Esophagus squamous epithelium (tissue), 5 donors: ENCODE measurements at regions of chr17 and their contacts with region 1.

Region 1: GRCh38 chr17:45270828-45271418 is 9.0 kb upstream of the SPATA32 start:
- DNase-seq: no peak
- H3K4me3 ChIP-seq: no peak overlapping the region
- H3K27ac ChIP-seq: no peak overlapping the region
- H3K4me1 ChIP-seq: peaks cover 0 to 7% (median 0%) of the 10 kb centered on the region in 3 donors
- H3K27me3 ChIP-seq: no peaks in the 10 kb centered on the region
- CTCF ChIP-seq: peak in 5 of 6 experiments; percentile 19 to 55 (median 39)
- POLR2A ChIP-seq: no peak

Region 2: GRCh38 chr17:45123930-45124796 is 146.8 kb before region 1 on chr17:
- intact Hi-C with region 1: no loop called
- DNase-seq: no peak
- H3K4me3 ChIP-seq: no peak overlapping the region
- H3K27ac ChIP-seq: peak overlapping the region; percentile 74 to 84 (median 82)
- H3K4me1 ChIP-seq: peaks cover 42 to 65% (median 46%) of the 10 kb centered on the region in 3 donors
- H3K27me3 ChIP-seq: no peaks in the 10 kb centered on the region
- CTCF ChIP-seq: no peak
- POLR2A ChIP-seq: no peak

Region 3: DNA sequence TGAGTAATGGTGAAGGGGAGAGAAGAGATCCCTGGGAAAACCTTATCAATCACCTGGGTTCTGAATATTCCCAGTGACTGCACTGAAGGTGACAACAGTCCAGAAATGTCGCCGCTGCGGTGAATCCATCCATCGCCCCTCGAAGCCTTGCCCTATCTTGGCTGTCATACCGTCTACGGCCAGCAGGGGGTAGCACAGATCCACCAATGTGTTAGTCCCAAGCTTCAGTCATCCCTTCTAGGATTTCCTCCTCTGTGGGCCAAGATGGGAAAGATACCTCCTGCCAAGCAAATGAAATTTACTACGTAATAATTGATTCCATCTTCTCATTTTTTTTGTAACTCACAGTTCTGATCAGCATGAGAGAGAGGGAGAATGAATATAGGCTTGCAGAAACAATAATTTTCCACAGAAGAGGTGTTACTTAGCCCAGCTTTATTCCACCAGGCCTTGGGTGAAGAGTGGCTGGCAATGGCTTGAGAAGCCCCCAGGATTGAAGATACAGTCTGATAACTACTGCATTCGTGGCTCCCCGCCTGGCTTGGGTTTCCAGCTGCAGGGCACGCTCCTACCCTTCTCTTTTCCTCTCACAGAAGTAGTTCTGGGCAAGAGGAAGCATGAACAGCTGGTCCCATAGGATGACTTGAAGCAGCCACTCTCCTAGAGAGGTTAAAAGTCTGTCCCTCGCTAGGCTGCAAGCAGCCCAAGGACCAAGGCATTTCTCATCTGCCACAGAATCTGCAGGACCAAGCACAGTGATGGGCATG is 51.8 kb before region 1 on chr17:
- intact Hi-C with region 1: loop called (anchors 5 kb)
- DNase-seq: no peak
- H3K4me3 ChIP-seq: no peak overlapping the region
- H3K27ac ChIP-seq: peak overlapping the region in 1 of 4 donors; percentile 25
- H3K4me1 ChIP-seq: peaks cover 4 to 56% (median 23%) of the 10 kb centered on the region in 3 donors
- H3K27me3 ChIP-seq: peaks cover 0 to 35% (median 3%) of the 10 kb centered on the region in 4 donors
- CTCF ChIP-seq: peak; percentile 85 to 99 (median 98)
- POLR2A ChIP-seq: no peak

Region 4: GRCh38 chr17:45628019-45628418 is 357.1 kb after region 1 on chr17:
- intact Hi-C with region 1: no loop called
- DNase-seq: no peak
- H3K4me3 ChIP-seq: no peak overlapping the region
- H3K27ac ChIP-seq: no peak overlapping the region
- H3K4me1 ChIP-seq: no peaks in the 10 kb centered on the region
- H3K27me3 ChIP-seq: no peaks in the 10 kb centered on the region
- CTCF ChIP-seq: no peak
- POLR2A ChIP-seq: no peak